GM10248 (cell line): ENCODE measurements at regions of chr9 and their contacts with region 1.

Region 1: DNA sequence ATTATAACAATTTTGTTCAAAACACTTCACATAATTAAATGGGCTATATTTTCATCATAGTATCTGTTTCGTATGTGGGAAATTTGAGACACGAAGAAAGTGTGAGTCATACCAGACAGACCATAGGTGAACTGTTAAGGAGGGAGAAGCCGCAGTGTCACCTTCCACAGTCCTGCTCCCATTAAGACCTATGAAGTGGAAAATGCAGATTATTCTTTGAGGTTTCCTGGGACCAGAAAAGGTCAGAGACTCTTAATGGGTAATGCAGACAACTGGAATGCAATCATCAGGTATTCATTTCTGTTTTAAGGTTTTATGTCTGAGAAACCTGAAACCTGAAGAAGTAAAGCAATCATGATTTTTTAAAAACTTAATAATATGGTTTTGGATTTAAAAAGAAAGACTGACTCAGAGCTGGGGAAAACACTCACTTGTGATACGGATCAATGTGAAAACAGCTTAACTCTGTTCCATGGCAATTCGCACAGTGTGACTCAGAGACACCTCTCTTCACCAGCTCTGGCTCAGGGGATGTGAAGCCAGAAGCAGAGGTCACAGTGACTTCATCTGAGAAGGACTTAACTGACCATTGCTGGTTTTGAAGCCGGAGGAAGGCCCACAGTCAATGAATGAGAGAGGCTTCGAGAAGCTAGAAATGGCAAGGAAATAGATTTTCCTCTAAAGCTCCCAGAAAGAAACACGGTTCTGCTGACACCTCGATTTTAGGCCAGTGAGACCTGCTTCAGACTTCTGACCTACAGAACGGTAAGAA is 17.2 kb upstream of the GCNT1 start:
- DNase-seq: peak; percentile 32
- CTCF ChIP-seq: no peak

Region 2: GRCh38 chr9:76127637-76128036 is 314.1 kb before region 1 on chr9:
- CTCF ChIA-PET with region 1: no interaction called
- POLR2A ChIA-PET with region 1: no interaction called
- DNase-seq: no peak
- CTCF ChIP-seq: no peak

Region 3: GRCh38 chr9:76426807-76427419 is 14.8 kb before region 1 on chr9:
- CTCF ChIA-PET with region 1: interaction called, 14 read pairs
- POLR2A ChIA-PET with region 1: no interaction called
- DNase-seq: no peak
- CTCF ChIP-seq: no peak

Region 4: GRCh38 chr9:76458903-76459690 is 17.4 kb after region 1 on chr9 and contains the start of gene GCNT1:
- CTCF ChIA-PET with region 1: interaction called, 74 read pairs
- POLR2A ChIA-PET with region 1: interaction called, 3 read pairs
- DNase-seq: peak; percentile 95
- CTCF ChIP-seq: peak; percentile 57